ENCODE measurements at regions of chr10 and their contacts with region 1.

Region 1: DNA sequence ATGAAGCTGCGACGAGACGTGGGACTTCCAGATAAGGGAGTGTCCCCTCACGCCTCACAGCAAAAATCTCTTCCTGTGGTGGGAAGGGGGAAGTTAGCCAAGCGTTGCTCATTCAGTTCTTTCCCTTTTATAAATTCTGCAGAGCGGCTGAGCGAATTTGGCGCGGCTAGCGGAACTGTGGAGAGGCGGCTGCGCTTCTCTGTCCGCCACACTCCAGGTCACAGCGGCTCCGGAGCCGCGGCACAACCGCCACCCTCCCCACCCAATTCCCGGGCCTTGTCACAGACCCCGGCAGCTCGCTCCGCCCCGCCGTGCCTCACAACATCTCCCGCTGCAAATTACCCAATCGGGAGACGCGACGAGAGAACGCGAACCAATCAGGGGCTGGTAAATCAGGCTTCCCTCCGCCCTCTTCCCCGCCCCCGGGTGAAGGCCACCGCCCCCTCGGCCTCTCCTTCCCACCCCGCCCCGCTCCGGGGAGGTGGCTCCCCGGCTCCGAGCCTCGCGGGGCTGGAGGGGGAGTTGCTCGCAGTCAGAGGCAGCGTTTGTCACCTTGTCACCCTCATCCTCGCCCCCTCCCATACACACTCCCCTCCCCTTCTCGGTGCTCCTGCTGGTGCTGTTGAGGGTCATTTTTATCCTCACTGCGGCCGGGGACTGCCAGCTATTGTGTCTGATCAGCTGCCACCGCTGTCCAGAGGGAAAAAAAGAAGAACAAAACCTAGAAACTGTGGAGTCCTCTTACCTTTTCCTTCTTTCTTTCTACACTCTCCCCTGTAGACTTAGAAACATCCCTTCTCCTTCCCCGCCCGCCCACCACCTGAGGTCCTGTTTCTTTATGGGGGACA is 918 bp upstream of the ARHGAP21 start:
- DNase-seq: peak; percentile 97 to 98
- ATAC-seq: peak; percentile 93 to 94 (median 93)
- H3K4me3 ChIP-seq: peak overlapping the region; percentile 91
- H3K27ac ChIP-seq: peak overlapping the region; percentile 99
- H3K4me1 ChIP-seq: peaks cover 14% of the 10 kb centered on the region
- H3K27me3 ChIP-seq: no peaks in the 10 kb centered on the region
- CTCF ChIP-seq: no peak

Region 2: GRCh38 chr10:24642622-24643417 is 81.8 kb before region 1 on chr10:
- intact Hi-C with region 1: loop called (anchors 2 to 5 kb)
- DNase-seq: no peak
- ATAC-seq: peak; percentile 86 to 95 (median 90)
- H3K4me3 ChIP-seq: no peak overlapping the region
- H3K27ac ChIP-seq: no peak overlapping the region
- H3K4me1 ChIP-seq: peaks cover 19% of the 10 kb centered on the region
- H3K27me3 ChIP-seq: no peaks in the 10 kb centered on the region
- CTCF ChIP-seq: peak; percentile 83

Region 3: GRCh38 chr10:24661376-24661775 is 63.2 kb before region 1 on chr10:
- intact Hi-C with region 1: no loop called
- DNase-seq: no peak
- ATAC-seq: no peak
- H3K4me3 ChIP-seq: no peak overlapping the region
- H3K27ac ChIP-seq: no peak overlapping the region
- H3K4me1 ChIP-seq: no peaks in the 10 kb centered on the region
- H3K27me3 ChIP-seq: no peaks in the 10 kb centered on the region
- CTCF ChIP-seq: no peak

Region 4: GRCh38 chr10:24685958-24686540 is 38.6 kb before region 1 on chr10:
- intact Hi-C with region 1: loop called in 1 of 2 experiments (anchors 5 kb)
- DNase-seq: no peak
- ATAC-seq: peak in 3 of 4 donors; percentile 46 to 65 (median 62)
- H3K4me3 ChIP-seq: no peak overlapping the region
- H3K27ac ChIP-seq: peak overlapping the region; percentile 1
- H3K4me1 ChIP-seq: peaks cover 29% of the 10 kb centered on the region
- H3K27me3 ChIP-seq: no peaks in the 10 kb centered on the region
- CTCF ChIP-seq: no peak

Region 5: DNA sequence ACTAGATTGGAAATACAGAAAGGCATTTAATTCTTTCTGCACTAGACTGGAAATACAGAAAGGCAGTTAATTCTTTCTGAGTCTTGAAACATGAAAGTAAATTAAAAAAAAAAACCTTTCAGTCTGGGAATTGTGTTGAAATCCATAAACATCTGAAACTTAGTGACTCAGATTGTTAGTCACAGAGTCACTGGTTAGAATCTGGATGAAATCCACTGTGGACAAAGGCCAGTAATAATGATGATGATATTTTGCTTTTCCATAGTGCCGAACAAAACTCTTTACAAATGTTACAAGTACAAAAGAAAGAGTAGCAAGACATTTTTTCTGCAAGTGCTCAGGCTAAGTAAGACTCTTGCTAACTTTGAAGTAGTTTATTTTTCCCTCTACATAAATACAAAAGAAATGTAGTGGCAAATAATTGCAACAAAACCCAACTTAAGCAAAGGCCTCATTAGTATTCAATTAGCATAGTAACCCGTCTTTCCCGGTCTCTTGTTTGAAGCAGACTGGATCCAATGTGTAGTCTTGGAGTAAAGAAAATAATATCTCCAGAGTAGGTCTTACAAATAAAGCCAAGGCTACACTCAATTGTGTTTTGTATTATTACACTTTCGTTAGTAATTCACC is 233.6 kb after region 1 on chr10:
- intact Hi-C with region 1: loop called in 1 of 2 experiments (anchors 5 kb)
- DNase-seq: no peak
- ATAC-seq: peak; percentile 65 to 91 (median 79)
- H3K4me3 ChIP-seq: peak overlapping the region; percentile 1
- H3K27ac ChIP-seq: peak overlapping the region; percentile 72
- H3K4me1 ChIP-seq: peaks cover 8% of the 10 kb centered on the region
- H3K27me3 ChIP-seq: no peaks in the 10 kb centered on the region
- CTCF ChIP-seq: no peak

Region 6: GRCh38 chr10:24969841-24970281 is 245.3 kb after region 1 on chr10:
- intact Hi-C with region 1: no loop called
- DNase-seq: no peak
- ATAC-seq: no peak
- H3K4me3 ChIP-seq: no peak overlapping the region
- H3K27ac ChIP-seq: no peak overlapping the region
- H3K4me1 ChIP-seq: no peaks in the 10 kb centered on the region
- H3K27me3 ChIP-seq: no peaks in the 10 kb centered on the region
- CTCF ChIP-seq: no peak

Region 7: GRCh38 chr10:24989867-24990266 is 265.3 kb after region 1 on chr10:
- intact Hi-C with region 1: no loop called
- DNase-seq: no peak
- ATAC-seq: no peak
- H3K4me3 ChIP-seq: no peak overlapping the region
- H3K27ac ChIP-seq: no peak overlapping the region
- H3K4me1 ChIP-seq: no peaks in the 10 kb centered on the region
- H3K27me3 ChIP-seq: no peaks in the 10 kb centered on the region
- CTCF ChIP-seq: peak; percentile 16

Region 8: DNA sequence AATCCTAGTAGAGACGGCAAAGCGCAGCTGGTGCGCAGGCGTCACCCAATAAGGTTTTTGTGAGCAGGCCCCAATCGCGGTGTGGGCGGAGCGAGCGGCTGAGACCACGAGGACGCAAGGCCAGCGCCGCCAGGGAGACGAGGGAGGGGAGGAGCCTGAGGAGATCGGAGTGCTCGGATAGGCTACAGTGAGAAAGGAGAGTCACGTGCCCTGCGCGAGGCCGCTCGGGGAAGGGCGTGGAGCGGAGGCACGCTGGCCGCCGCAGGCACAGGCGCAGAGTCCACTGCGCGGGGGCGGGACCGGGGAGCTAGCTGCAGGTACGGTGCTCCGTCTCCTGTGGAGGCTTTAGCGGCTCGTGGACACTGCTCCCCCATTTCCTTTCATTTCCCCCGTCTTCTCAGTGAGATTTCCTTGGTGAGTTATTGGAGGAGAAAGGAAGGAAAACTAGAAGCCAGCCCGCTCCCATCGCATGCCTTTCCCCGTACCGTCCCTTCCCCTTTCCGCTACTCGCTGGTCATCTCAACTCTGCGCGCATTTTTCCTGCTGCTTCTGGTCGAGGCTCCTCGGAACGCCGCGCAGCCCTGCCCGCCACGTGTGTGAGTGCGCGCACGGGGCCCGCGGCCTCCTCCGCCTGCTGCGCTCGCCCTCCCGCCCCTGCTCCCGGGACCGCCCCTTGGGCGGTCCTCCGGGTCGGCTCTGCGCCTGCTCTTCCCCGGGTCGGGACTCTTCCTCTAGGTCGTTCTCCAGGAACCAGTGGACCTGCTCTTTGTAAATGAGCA is 292.0 kb after region 1 on chr10 and contains the start of gene THNSL1:
- intact Hi-C with region 1: loop called (anchors 2 to 10 kb)
- DNase-seq: peak; percentile 99
- ATAC-seq: peak; percentile 99 to 100 (median 99)
- H3K4me3 ChIP-seq: peak within 1 kb of the TSS; percentile 86
- H3K27ac ChIP-seq: peak within 1 kb of the TSS; percentile 95
- H3K4me1 ChIP-seq: peaks cover 11% of the 10 kb centered on the region
- H3K27me3 ChIP-seq: no peaks in the 10 kb centered on the region
- CTCF ChIP-seq: no peak
- total RNA-seq, gene THNSL1: 2.0 to 8.7 (median 5.7) TPM

Region 9: DNA sequence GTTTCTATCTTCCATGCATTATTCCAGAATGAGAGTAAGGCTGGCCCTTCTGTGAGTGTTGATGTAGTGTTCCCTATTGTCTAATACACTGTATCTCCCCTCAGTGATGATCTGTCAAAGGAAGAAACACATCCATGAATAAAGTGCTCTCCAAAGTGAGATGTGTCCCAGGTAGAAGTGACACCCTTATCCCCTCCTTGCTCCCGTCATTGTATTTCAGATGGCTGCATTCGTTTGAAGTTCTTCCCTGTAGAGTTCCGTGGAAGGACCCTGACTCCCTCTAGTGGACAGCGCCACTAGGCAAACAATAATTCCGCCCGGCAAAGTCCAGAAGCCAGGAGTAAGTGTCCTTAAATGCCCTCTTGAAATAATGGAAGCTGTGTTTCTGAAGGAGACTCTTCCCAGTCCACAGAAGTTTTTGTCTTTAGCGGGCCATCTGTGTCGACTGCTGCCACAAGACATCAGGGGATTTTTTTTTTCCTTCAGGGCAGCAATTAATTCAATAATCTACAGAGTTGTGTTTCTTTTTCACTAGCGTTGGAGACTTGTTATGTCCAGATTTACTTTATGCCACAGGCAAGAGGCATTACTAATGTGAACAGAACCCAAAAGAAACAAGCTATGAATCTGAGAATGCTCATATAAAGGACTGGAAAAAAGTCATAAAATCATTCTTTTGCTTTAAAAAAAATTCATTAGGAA is 356.4 kb after region 1 on chr10:
- intact Hi-C with region 1: loop called in 1 of 2 experiments (anchors 10 kb)
- DNase-seq: peak; percentile 66 to 82
- ATAC-seq: peak; percentile 90 to 99 (median 96)
- H3K4me3 ChIP-seq: no peak overlapping the region
- H3K27ac ChIP-seq: no peak overlapping the region
- H3K4me1 ChIP-seq: no peaks in the 10 kb centered on the region
- H3K27me3 ChIP-seq: no peaks in the 10 kb centered on the region
- CTCF ChIP-seq: peak; percentile 87

Measured in psoas muscle (tissue), 8 donors.